Activated CD4-positive, alpha-beta T cell treated with anti-CD3 and anti-CD28 coated beads, Interleukin-2, amount 10 ng/mL, durations not matched to agents 24 days and 14 days (primary cell): ENCODE measurements at regions of chr10 and their contacts with region 1.

Region 1: GRCh38 chr10:31707093-31708039 is 221.3 kb downstream of the ARHGAP12 start:
- DNase-seq: peak; percentile 84
- H3K4me3 Mint-ChIP-seq: peak overlapping the region; percentile 57
- H3K27ac Mint-ChIP-seq: peak overlapping the region; percentile 82
- H3K4me1 Mint-ChIP-seq: peaks cover 26% of the 10 kb centered on the region
- H3K27me3 Mint-ChIP-seq: no peaks in the 10 kb centered on the region

Region 2: DNA sequence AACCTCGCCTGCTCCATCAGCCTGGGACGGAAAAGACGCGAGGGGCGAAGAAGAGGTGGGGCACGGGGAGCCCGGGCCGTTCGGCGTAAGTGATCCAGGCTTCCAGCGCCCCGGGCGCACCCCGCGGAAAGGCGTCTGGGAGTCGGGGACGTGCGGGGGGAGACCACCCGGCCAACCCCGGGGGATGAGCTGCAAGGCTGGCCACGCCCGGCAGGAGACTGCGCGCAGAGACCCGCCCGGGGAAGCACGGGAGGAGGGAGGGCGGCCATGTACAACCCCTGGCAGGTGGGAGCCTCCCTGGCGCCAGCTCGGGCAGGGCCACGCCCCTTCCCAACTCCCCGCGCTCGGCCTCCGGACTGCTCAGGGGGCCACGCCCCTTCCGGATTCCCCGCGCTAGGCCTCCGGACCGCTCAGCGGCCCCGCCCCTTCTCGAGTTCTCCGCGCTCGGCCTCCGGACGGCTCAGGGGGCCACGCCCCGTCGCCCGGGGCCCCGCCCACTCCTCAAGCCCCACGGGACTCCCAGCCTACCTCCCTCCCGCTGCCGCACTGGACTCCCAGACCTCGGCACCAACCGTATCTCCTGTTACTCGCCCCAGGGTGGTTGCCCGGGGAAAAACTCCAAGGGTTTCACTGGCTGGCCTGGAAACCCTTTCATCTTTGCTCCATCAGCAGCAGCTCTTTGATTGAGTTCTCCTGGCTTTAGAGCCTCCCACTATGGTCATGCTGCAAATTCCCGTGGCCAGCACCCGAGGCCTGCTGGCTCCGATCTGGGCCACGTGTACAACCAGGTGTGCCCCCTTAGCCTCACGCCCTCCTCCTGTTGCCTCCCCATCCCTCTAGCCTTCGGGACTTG is 103.9 kb before region 1 on chr10:
- intact Hi-C with region 1: loop called (anchors 5 kb)
- DNase-seq: peak; percentile 95
- H3K4me3 Mint-ChIP-seq: peak overlapping the region; percentile 88
- H3K27ac Mint-ChIP-seq: no peak overlapping the region
- H3K4me1 Mint-ChIP-seq: peaks cover 26% of the 10 kb centered on the region
- H3K27me3 Mint-ChIP-seq: peaks cover 3% of the 10 kb centered on the region

Region 3: GRCh38 chr10:31687663-31688482 is 19.5 kb before region 1 on chr10:
- intact Hi-C with region 1: loop called (anchors 1 kb)
- DNase-seq: peak; percentile 82
- H3K4me3 Mint-ChIP-seq: no peak overlapping the region
- H3K27ac Mint-ChIP-seq: no peak overlapping the region
- H3K4me1 Mint-ChIP-seq: no peaks in the 10 kb centered on the region
- H3K27me3 Mint-ChIP-seq: peaks cover 2% of the 10 kb centered on the region

Region 4: GRCh38 chr10:31721096-31721495 is 13.7 kb after region 1 on chr10:
- intact Hi-C with region 1: no loop called
- DNase-seq: no peak
- H3K4me3 Mint-ChIP-seq: no peak overlapping the region
- H3K27ac Mint-ChIP-seq: no peak overlapping the region
- H3K4me1 Mint-ChIP-seq: peaks cover 10% of the 10 kb centered on the region
- H3K27me3 Mint-ChIP-seq: no peaks in the 10 kb centered on the region

Region 5: DNA sequence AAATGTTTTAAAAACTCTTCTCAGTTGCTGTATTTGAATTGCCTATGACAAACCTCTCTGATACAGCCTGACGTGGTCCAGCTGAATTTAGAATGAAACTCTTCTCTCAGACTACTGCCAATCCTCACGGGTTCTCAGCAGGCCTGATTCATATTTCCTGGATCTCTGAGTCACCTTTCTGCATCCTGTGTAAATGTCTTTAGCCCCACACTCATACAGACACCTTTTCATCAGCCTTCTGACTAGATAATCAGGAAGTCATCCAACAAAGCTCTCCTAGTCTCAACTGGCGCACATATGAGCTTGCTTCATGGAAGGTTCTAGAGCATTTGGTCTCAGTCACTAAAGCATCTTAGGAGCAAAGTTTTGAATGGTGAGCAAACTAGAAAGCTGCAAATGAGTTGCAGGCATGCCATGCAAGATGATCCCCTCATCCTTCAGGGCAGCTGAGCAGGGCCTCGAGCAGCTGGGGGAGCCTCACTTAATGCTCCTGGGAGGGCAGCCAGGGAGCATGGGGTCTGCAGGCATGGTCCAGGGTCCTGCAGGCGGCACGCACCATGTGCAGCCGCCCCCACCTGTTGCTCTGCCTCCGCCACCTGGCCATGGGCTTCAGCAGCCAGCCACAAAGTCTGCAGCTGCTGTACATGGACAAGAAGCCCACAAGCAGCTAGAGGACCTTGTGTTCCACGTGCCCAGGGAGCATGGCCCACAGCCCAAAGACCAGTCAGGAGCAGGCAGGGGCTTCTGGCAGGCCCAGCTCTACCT is 38.4 kb after region 1 on chr10:
- intact Hi-C with region 1: loop called (anchors 1 kb)
- DNase-seq: peak; percentile 84
- H3K4me3 Mint-ChIP-seq: no peak overlapping the region
- H3K27ac Mint-ChIP-seq: peak overlapping the region; percentile 79
- H3K4me1 Mint-ChIP-seq: peaks cover 27% of the 10 kb centered on the region
- H3K27me3 Mint-ChIP-seq: no peaks in the 10 kb centered on the region

Region 6: GRCh38 chr10:31759799-31760626 is 52.6 kb after region 1 on chr10:
- intact Hi-C with region 1: loop called (anchors 1 kb)
- DNase-seq: peak; percentile 98
- H3K4me3 Mint-ChIP-seq: peak overlapping the region; percentile 96
- H3K27ac Mint-ChIP-seq: peak overlapping the region; percentile 91
- H3K4me1 Mint-ChIP-seq: peaks cover 12% of the 10 kb centered on the region
- H3K27me3 Mint-ChIP-seq: no peaks in the 10 kb centered on the region